ENCODE measurements at regions of chr5 and their contacts with region 1.

Region 1: GRCh38 chr5:76867827-76868693 is 18.2 kb downstream of the S100Z start:
- DNase-seq: peak in 4 of 5 donors; percentile 55 to 63 (median 60)
- ATAC-seq: peak; percentile 64 to 95 (median 90)
- H3K4me3 ChIP-seq: peak overlapping the region in 1 of 12 donors; percentile 20
- H3K27ac ChIP-seq: peak overlapping the region in 3 of 12 donors; percentile 28 to 38 (median 30)
- H3K4me1 ChIP-seq: peaks cover 0 to 7% (median 0%) of the 10 kb centered on the region in 12 donors
- H3K27me3 ChIP-seq: no peaks in the 10 kb centered on the region
- CTCF ChIP-seq: peak; percentile 69 to 90 (median 82)
- POLR2A ChIP-seq: no peak

Region 2: GRCh38 chr5:76041863-76042262 is 826.2 kb before region 1 on chr5:
- intact Hi-C with region 1: no loop called
- DNase-seq: no peak
- ATAC-seq: no peak
- H3K4me3 ChIP-seq: no peak overlapping the region
- H3K27ac ChIP-seq: no peak overlapping the region
- H3K4me1 ChIP-seq: no peaks in the 10 kb centered on the region
- H3K27me3 ChIP-seq: peaks cover 0 to 9% (median 0%) of the 10 kb centered on the region in 9 donors
- CTCF ChIP-seq: no peak
- POLR2A ChIP-seq: no peak

Region 3: DNA sequence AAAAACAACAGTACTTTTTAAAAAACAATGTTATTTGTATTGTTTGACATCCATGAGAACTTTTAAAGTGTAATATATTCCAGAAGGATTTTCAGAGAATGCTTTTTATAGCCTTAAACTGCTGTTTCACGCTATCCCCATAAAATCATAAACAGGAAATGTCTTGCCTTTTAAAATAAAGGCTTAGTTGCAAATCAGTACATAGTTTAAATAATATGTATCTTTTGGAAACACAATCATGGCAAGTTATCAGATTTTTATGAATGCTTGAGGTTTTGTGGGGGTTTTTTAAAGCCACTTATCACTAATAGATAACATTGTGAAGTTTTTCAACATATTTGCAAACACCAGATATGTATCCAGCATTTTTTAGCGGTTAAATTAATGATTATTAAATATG is 207.7 kb before region 1 on chr5:
- intact Hi-C with region 1: no loop called
- DNase-seq: no peak
- ATAC-seq: no peak
- H3K4me3 ChIP-seq: no peak overlapping the region
- H3K27ac ChIP-seq: no peak overlapping the region
- H3K4me1 ChIP-seq: peaks cover 0 to 13% (median 2%) of the 10 kb centered on the region in 12 donors
- H3K27me3 ChIP-seq: no peaks in the 10 kb centered on the region
- CTCF ChIP-seq: no peak
- POLR2A ChIP-seq: no peak

Region 4: DNA sequence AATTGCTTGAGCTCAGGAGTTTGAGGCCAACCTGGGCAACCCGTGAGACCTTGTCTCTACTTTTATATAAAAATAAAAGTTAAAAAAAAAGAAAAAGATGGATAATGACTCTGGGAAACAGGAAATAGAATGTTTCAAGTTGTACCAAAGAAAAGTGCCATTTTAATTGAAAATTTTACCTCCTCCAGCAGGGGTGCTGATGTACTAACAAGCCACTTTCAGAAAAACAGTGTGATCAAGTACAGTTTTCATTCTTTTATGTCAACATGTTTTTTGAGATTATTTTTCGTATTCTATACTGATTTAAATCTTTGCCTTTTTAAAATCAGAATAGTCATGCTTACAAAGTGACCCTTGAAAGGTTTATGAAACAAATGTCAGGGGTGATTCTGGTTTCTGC is 121.4 kb before region 1 on chr5:
- intact Hi-C with region 1: no loop called
- DNase-seq: no peak
- ATAC-seq: no peak
- H3K4me3 ChIP-seq: no peak overlapping the region
- H3K27ac ChIP-seq: no peak overlapping the region
- H3K4me1 ChIP-seq: no peaks in the 10 kb centered on the region
- H3K27me3 ChIP-seq: no peaks in the 10 kb centered on the region
- CTCF ChIP-seq: no peak
- POLR2A ChIP-seq: no peak

Region 5: DNA sequence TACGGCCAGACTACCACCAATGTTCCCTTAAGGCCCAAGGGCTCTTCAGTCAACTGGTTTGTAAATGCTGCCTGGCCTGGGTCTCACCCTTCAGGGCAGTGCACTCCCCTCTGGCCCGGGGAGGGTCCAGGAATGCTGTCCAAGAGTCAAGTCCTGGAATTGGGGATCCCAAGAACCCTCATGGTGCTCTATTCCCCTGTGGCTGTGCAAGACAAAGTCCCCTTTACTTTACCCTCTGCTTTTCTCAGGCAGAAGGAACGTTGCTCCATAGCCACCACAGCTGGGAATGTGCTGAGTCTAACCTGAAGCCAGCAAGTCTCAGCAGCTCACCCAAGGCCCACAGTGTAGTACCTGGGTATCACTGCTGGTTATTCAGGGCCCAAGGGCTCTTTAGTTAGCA is 33.5 kb after region 1 on chr5:
- intact Hi-C with region 1: no loop called
- DNase-seq: no peak
- ATAC-seq: no peak
- H3K4me3 ChIP-seq: no peak overlapping the region
- H3K27ac ChIP-seq: no peak overlapping the region
- H3K4me1 ChIP-seq: no peaks in the 10 kb centered on the region
- H3K27me3 ChIP-seq: no peaks in the 10 kb centered on the region
- CTCF ChIP-seq: no peak
- POLR2A ChIP-seq: no peak

Region 6: DNA sequence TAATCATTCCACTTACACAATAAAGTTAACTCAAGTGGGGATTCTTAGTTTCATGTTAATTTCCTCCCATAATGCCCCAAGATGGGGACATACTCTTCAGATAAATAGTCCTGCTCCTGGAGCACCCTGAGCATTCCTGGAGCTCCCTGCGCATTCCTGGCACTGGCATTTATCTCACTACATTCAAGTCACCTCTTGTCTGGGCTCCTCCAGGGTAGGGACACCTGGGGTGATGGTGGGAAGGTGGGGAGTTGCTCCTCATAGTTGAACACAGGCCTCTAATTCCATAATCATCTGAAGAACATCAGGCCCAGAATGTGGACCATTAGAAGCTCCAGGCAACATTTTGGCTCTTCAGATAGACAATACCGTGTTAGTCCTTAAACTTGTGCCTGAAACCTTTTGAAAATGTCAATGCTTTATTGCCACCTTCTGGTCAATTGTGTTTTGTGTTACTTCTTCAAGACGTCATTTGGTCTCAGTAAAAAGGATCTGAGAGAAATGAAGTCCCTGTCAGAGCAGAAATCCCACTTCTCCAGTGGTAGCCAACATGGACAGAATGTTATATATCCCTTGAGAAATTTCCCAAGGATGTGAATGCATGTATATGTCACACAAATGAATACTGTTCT is 148.0 kb after region 1 on chr5:
- intact Hi-C with region 1: loop called (anchors 1 to 5 kb)
- DNase-seq: no peak
- ATAC-seq: peak in 2 of 4 donors; percentile 37 to 52
- H3K4me3 ChIP-seq: no peak overlapping the region
- H3K27ac ChIP-seq: no peak overlapping the region
- H3K4me1 ChIP-seq: peaks cover 0 to 8% (median 0%) of the 10 kb centered on the region in 12 donors
- H3K27me3 ChIP-seq: no peaks in the 10 kb centered on the region
- CTCF ChIP-seq: peak; percentile 21 to 60 (median 40)
- POLR2A ChIP-seq: no peak

Region 7: DNA sequence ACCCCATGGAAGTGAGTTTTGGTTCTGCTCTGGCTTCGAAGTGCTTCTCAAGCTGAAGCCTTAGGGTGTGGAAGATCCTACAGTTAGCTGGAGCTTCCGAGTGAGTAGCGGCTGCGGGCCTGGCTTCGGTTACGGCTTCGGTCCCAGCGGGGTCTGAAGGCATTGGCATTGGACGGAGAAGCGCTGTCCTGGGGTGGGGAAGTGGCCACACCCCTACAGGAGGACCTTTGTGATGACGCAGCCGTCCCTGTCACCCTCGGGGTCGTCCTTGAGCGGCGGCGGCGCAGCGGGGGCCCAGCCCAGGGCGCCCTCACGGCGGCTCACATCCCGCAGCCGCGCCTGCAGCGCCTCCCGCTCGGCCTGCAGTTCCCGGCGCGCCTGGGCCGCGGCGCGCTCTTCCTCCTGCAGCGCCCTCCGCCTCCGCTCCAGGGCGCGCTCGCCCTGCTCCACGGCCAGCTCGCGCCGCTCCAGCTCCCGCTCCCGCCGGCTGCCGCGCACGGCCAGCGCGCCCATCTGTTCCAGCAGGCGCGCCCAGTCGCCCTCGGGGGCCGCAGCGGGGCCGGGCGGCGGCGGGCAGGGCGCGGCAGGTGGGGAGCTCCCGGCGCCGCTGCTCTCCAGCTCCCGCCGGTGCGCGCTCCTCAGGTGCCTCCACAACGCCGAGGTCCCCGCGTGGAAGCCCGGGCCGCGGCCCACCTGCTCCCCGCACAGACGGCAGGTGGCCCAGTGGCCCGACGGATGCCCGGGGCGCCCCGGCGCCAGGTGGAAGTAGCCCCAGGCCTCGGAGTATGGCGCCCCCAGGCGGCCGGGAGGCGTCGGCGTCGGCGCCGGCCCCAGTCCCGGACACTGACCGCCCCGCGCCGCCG is 209.1 kb after region 1 on chr5:
- intact Hi-C with region 1: loop called in 3 of 10 experiments (anchors 2 to 5 kb)
- DNase-seq: peak; percentile 71 to 88 (median 74)
- ATAC-seq: peak; percentile 52 to 91 (median 88)
- H3K4me3 ChIP-seq: peak overlapping the region; percentile 26 to 84 (median 59)
- H3K27ac ChIP-seq: peak overlapping the region; percentile 3 to 68 (median 49)
- H3K4me1 ChIP-seq: peaks cover 0 to 16% (median 2%) of the 10 kb centered on the region in 12 donors
- H3K27me3 ChIP-seq: no peaks in the 10 kb centered on the region
- CTCF ChIP-seq: peak; percentile 52 to 84 (median 75)
- POLR2A ChIP-seq: no peak

Measured in heart left ventricle (tissue), 16 donors.